CD8-positive, alpha-beta memory T cell (primary cell): ENCODE measurements at regions of chr10 and their contacts with region 1.

Region 1: GRCh38 chr10:110210674-110211464 is 3.5 kb downstream of the MXI1 start:
- DNase-seq: peak; percentile 78 to 94 (median 86)
- H3K4me3 ChIP-seq: peak overlapping the region; percentile 95
- H3K4me3 Mint-ChIP-seq: peak overlapping the region; percentile 89 to 99 (median 94)
- H3K27ac ChIP-seq: peak overlapping the region; percentile 93
- H3K27ac Mint-ChIP-seq: peak overlapping the region; percentile 94 to 99 (median 98)
- H3K4me1 ChIP-seq: peaks cover 52% of the 10 kb centered on the region
- H3K4me1 Mint-ChIP-seq: peaks cover 47 to 62% (median 55%) of the 10 kb centered on the region in 3 donors
- H3K27me3 ChIP-seq: peaks cover 5% of the 10 kb centered on the region
- H3K27me3 Mint-ChIP-seq: peaks cover 4 to 14% of the 10 kb centered on the region in 2 donors

Region 2: DNA sequence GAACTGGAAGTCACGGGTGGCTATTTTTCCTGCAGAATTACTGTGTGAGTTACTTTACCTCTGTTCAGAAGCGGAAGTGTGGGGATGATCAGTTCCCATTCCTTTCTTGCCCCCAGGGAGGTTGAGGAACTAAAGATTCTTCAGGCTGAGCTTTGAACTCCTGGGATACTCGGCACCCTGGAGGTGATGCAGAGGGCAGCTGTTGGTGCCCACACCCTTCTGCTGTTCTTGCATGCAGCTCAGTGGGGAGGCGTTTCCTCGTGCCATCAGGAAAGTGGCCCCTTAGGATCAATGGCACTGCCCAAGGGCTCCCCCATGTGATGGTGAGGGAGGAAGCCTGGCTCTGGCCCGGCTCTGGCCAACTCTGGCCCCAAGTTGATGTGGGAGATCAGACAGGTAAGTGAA is 48.1 kb before region 1 on chr10:
- CTCF ChIA-PET with region 1: interaction called, 6 read pairs
- POLR2A ChIA-PET with region 1: interaction called, 52 read pairs
- DNase-seq: no peak
- H3K4me3 ChIP-seq: no peak overlapping the region
- H3K4me3 Mint-ChIP-seq: no peak overlapping the region
- H3K27ac ChIP-seq: no peak overlapping the region
- H3K27ac Mint-ChIP-seq: no peak overlapping the region
- H3K4me1 ChIP-seq: peaks cover 4% of the 10 kb centered on the region
- H3K4me1 Mint-ChIP-seq: peaks cover 8 to 12% (median 10%) of the 10 kb centered on the region in 3 donors
- H3K27me3 ChIP-seq: peaks cover 60% of the 10 kb centered on the region
- H3K27me3 Mint-ChIP-seq: peaks cover 74 to 84% of the 10 kb centered on the region in 2 donors

Region 3: DNA sequence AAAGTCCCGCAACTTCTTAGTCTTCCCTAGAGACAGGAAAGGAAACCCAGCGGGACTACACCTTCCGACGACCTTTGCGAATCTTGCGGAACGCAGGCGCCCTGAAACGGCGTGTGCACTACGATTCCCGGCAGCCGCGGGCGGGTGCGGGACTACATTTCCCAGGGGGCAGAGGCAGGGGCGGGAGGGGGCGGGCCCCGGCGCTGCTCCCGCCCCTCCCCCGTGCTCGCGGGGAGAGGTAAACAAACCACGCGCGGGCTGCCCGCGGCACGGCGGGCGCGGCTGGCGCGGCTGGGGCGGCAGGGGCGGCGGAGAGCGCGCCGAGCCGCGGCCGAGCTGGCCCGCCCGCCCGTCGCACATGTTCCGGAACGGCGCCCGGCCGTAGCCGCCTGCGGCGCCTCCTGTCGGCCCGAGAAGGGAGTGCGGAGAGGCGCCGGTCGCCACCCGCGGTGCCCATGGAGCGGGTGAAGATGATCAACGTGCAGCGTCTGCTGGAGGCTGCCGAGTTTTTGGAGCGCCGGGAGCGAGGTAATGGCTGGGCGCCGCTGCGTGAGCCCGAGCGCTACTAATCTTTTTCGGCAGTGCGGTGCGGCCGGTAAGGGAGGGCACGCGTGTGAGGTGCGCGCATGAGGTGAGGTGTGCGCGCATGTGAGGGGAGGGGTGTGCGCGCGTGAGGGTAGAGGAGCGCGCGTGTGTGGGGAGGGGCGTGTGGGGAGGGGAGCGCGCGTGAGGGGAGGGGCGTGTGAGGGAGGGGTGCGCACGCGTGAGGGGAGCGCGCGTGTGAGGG is 15.1 kb after region 1 on chr10:
- CTCF ChIA-PET with region 1: interaction called, 179 read pairs
- POLR2A ChIA-PET with region 1: interaction called, 117 read pairs
- DNase-seq: peak; percentile 81 to 91 (median 86)
- H3K4me3 ChIP-seq: peak overlapping the region; percentile 63
- H3K4me3 Mint-ChIP-seq: peak overlapping the region; percentile 92 to 98 (median 95)
- H3K27ac ChIP-seq: peak overlapping the region; percentile 49
- H3K27ac Mint-ChIP-seq: peak overlapping the region; percentile 92 to 98 (median 94)
- H3K4me1 ChIP-seq: peaks cover 22% of the 10 kb centered on the region
- H3K4me1 Mint-ChIP-seq: peaks cover 30 to 51% (median 41%) of the 10 kb centered on the region in 3 donors
- H3K27me3 ChIP-seq: no peaks in the 10 kb centered on the region
- H3K27me3 Mint-ChIP-seq: peaks cover 0 to 3% of the 10 kb centered on the region in 2 donors

Region 4: DNA sequence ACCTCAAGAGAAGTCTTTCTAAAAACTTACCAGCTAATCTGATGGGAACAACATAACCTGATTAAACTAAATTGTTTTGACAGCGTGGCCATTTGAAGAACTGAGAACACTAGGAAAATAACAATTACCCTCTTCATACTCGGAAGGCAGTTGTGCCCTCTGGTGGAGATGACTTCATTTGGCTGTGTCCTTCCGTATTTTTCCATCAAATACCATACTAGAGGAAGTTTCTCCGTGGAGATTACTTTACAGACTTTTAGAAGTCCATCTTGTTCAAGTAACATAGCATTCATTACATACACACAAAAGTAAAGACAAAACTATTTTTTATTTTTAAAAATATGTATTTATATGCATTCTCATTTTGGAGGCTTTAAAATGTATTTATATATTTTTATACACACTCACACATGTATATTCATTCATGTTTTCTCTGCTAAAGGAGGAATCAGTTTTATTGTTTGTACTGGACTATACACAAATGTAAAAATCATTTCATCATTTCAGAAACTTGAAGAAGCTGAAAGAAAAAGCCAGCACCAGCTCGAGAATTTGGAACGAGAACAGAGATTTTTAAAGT is 68.6 kb after region 1 on chr10:
- CTCF ChIA-PET with region 1: interaction called, 32 read pairs
- POLR2A ChIA-PET with region 1: interaction called, 5 read pairs
- DNase-seq: peak in 4 of 5 donors; percentile 21 to 57 (median 36)
- H3K4me3 ChIP-seq: no peak overlapping the region
- H3K4me3 Mint-ChIP-seq: no peak overlapping the region
- H3K27ac ChIP-seq: no peak overlapping the region
- H3K27ac Mint-ChIP-seq: no peak overlapping the region
- H3K4me1 ChIP-seq: peaks cover 11% of the 10 kb centered on the region
- H3K4me1 Mint-ChIP-seq: peaks cover 20 to 29% (median 26%) of the 10 kb centered on the region in 3 donors
- H3K27me3 ChIP-seq: no peaks in the 10 kb centered on the region
- H3K27me3 Mint-ChIP-seq: no peaks in the 10 kb centered on the region

Region 5: GRCh38 chr10:110311357-110311949 is 100.6 kb after region 1 on chr10:
- CTCF ChIA-PET with region 1: no interaction called
- POLR2A ChIA-PET with region 1: no interaction called
- DNase-seq: peak in 4 of 5 donors; percentile 7 to 54 (median 25)
- H3K4me3 ChIP-seq: no peak overlapping the region
- H3K4me3 Mint-ChIP-seq: no peak overlapping the region
- H3K27ac ChIP-seq: no peak overlapping the region
- H3K27ac Mint-ChIP-seq: no peak overlapping the region
- H3K4me1 ChIP-seq: no peaks in the 10 kb centered on the region
- H3K4me1 Mint-ChIP-seq: peaks cover 0 to 5% (median under 1%) of the 10 kb centered on the region in 3 donors
- H3K27me3 ChIP-seq: no peaks in the 10 kb centered on the region
- H3K27me3 Mint-ChIP-seq: peaks cover 1 to 9% of the 10 kb centered on the region in 2 donors